Naive thymus-derived CD8-positive, alpha-beta T cell (primary cell): ENCODE measurements at regions of chr7 and their contacts with region 1.

Region 1: GRCh38 chr7:139058943-139059342 is 23.1 kb upstream of the ZC3HAV1L start:
- DNase-seq: no peak
- ATAC-seq: no peak
- H3K4me3 Mint-ChIP-seq: no peak overlapping the region
- H3K27ac Mint-ChIP-seq: peak overlapping the region in 8 of 10 donors; percentile 40 to 88 (median 76)
- H3K4me1 Mint-ChIP-seq: peaks cover 17 to 55% (median 45%) of the 10 kb centered on the region in 4 donors
- H3K27me3 Mint-ChIP-seq: no peaks in the 10 kb centered on the region

Region 2: DNA sequence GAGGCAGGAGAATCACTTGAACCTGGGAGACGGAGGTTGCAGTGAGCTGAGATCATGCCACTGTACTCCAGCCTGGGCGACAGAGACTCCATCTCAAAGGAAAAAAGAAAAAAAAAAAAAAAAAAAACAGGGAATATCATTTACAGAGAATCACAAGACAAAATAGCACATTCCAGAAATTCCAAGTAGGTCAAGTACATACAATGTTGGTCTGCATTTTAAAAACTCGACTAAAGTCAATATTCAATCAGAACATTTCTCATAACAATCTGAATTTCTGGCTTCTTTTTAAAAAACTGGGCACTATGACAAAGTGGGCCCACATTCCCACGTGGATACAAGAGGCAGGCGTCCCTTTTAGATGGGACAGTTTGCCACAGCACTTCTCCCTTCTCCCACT is 35.9 kb before region 1 on chr7:
- POLR2A ChIA-PET with region 1: no interaction called
- DNase-seq: no peak
- ATAC-seq: no peak
- H3K4me3 Mint-ChIP-seq: no peak overlapping the region
- H3K27ac Mint-ChIP-seq: no peak overlapping the region
- H3K4me1 Mint-ChIP-seq: peaks cover 0 to 2% (median 0%) of the 10 kb centered on the region in 4 donors
- H3K27me3 Mint-ChIP-seq: no peaks in the 10 kb centered on the region

Region 3: GRCh38 chr7:139044813-139045794 is 13.8 kb before region 1 on chr7:
- POLR2A ChIA-PET with region 1: interaction called, 11 read pairs
- DNase-seq: peak in 3 of 10 donors; percentile 35 to 46 (median 46)
- ATAC-seq: peak; percentile 29 to 70
- H3K4me3 Mint-ChIP-seq: peak overlapping the region in 9 of 10 donors; percentile 40 to 73 (median 55)
- H3K27ac Mint-ChIP-seq: peak overlapping the region; percentile 23 to 93 (median 78)
- H3K4me1 Mint-ChIP-seq: peaks cover 31 to 66% (median 64%) of the 10 kb centered on the region in 4 donors
- H3K27me3 Mint-ChIP-seq: no peaks in the 10 kb centered on the region

Region 4: DNA sequence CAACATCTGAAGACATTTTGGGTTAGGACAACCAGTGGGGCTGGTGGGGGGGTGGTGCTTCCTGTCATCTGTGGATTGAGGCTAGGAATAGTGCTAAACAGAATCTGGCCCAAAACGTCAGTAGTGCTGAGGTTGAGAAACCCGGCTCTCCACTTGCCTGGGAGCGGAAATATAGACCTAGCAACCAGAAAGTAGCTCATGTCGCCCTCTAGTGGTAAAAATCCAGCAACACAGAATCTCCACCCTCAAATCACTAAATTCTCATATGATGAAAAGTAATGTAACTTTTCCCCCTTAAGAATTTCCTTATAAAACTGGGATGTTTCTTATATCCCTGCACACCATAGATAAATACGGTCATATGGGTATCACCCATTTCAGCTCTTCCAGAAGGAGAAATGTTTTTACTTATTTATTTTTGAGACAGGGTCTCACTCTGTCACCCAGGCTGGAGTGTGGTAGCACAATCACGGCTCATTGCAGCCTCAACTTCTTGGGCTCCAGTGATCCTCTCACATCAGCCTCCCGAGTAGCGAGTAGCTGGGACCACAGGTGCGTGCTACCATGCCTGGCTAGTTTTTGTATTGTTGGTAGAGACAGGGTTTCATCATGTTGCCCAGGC is 16.2 kb after region 1 on chr7:
- POLR2A ChIA-PET with region 1: interaction called, 11 read pairs
- DNase-seq: peak; percentile 27 to 85 (median 71)
- ATAC-seq: peak; percentile 71 to 80
- H3K4me3 Mint-ChIP-seq: peak overlapping the region; percentile 16 to 83 (median 55)
- H3K27ac Mint-ChIP-seq: peak overlapping the region; percentile 29 to 96 (median 90)
- H3K4me1 Mint-ChIP-seq: peaks cover 20 to 79% (median 70%) of the 10 kb centered on the region in 4 donors
- H3K27me3 Mint-ChIP-seq: no peaks in the 10 kb centered on the region